ENCODE measurements at regions of chr22 and their contacts with region 1.

Region 1: DNA sequence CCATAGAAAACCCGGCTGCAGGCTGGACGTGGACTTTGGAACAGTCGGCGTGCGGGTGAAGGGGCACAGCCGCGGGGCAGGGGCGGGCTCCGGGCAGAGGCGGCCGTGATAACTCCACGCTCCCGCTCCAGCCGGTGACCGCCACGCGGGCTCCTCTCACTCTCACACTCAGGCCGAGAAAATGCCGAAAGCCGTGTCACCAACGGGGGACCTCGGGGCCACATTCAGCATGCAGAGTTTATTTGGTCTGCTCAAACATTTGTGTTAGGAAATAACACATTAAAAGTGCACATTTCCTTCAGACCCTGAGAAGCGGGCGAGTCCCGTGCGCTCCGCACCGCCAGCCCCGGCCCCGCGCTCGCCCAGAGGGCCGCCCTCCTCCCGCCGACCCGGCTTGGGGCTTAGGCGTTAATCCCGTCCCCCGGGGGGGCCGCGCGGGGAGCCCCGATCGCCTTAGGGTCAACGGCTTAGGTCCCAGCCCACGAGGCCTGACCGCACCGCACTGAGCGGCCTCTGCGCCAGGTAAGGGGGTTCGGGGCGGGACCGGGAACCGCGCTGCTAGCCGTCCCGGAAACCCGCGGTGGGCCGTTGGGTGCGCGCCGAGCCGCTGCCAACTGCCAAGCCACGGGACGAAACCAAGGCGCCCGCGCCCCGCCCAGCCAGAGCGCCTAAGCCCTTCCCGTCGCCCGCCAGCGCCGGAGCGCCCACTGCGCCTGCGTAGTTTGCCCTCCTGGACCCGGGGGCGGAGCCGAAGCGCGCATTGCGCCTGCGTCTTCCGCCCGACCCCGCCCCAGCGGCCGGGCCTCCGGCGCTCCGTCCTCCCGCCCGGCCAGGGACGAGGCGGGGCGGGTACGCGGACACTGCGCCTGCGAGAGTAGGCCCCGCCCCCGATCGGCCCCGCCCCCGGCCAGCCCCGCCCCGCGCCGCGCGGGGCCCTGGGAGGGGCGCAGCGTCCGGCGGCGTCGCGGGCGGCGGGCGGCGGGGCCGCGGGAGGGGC is at the start of gene ZBED4:
- DNase-seq: peak; percentile 91 to 96
- ATAC-seq: peak; percentile 88 to 90
- H3K4me3 ChIP-seq: peak within 1 kb of the TSS; percentile 66 to 82 (median 73)
- H3K27ac ChIP-seq: peak within 1 kb of the TSS; percentile 83 to 92 (median 86)
- H3K4me1 ChIP-seq: peaks cover 25 to 35% of the 10 kb centered on the region in 2 donors
- H3K27me3 ChIP-seq: peaks cover 26 to 27% (median 26%) of the 10 kb centered on the region in 3 donors
- CTCF ChIP-seq: no peak
- POLR2A ChIP-seq: peak; percentile 74 to 82
- total RNA-seq, gene ZBED4: 6.7 to 8.4 (median 7.5) TPM

Region 2: GRCh38 chr22:49779853-49780697 is 73.1 kb before region 1 on chr22:
- in situ Hi-C with region 1: no loop called
- intact Hi-C with region 1: loop called (anchors 2 kb)
- DNase-seq: peak; percentile 47 to 77
- ATAC-seq: peak; percentile 81 to 83
- H3K4me3 ChIP-seq: no peak overlapping the region
- H3K27ac ChIP-seq: peak overlapping the region; percentile 22 to 74 (median 69)
- H3K4me1 ChIP-seq: peaks cover 23 to 29% of the 10 kb centered on the region in 2 donors
- H3K27me3 ChIP-seq: no peaks in the 10 kb centered on the region
- CTCF ChIP-seq: no peak
- POLR2A ChIP-seq: no peak

Region 3: GRCh38 chr22:49789289-49790141 is 63.7 kb before region 1 on chr22:
- in situ Hi-C with region 1: no loop called
- intact Hi-C with region 1: loop called (anchors 2 kb)
- DNase-seq: peak in 1 of 2 donors; percentile 50
- ATAC-seq: no peak
- H3K4me3 ChIP-seq: peak overlapping the region in 3 of 4 donors; percentile 3 to 24 (median 21)
- H3K27ac ChIP-seq: peak overlapping the region; percentile 69 to 83 (median 79)
- H3K4me1 ChIP-seq: peaks cover 76 to 83% of the 10 kb centered on the region in 2 donors
- H3K27me3 ChIP-seq: no peaks in the 10 kb centered on the region
- CTCF ChIP-seq: no peak
- POLR2A ChIP-seq: no peak

Region 4: DNA sequence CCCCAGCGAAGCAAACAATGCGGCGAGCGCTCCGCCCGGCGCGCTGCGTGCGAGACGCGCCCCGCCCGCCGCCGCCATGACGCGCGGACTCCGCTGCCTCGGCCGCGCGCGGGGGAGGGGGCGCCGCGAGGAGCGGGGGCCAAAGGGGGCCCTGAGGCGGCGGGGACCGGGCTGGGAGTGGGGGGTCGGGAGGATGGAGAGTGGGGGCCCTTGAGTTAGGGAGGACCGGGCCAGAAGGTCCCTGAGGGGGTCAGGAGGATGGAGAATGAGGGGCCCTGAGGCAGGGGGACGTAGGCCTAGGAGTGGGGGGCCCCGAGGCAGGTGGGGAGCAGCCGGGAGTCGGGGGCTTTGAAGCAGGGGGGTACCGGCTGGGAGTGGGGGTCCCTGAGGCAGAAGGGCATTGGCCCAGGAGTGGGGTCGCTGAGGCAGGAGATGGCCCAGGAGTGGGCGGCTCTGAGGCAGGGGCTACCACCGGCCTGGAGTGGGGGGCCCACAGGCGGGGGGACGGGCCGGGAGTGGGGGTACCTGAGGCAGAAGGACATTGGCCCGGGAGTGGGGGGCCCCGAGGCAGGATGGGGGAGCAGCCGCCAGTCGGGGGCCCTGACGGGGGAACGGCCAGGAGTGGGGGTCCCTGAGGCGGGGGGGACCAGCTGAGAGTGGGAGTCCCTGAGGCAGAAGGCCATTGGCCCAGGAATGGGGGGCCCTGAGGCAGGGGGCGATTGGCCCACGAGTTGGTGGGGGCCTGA is 25.2 kb before region 1 on chr22 and contains the start of gene BRD1:
- in situ Hi-C with region 1: no loop called
- intact Hi-C with region 1: loop called (anchors 1 kb)
- DNase-seq: peak in 1 of 2 donors; percentile 42
- ATAC-seq: peak; percentile 68 to 69
- H3K4me3 ChIP-seq: peak within 1 kb of the TSS; percentile 62 to 70 (median 65)
- H3K27ac ChIP-seq: peak within 1 kb of the TSS; percentile 75 to 90 (median 82)
- H3K4me1 ChIP-seq: peaks cover 19 to 27% of the 10 kb centered on the region in 2 donors
- H3K27me3 ChIP-seq: no peaks in the 10 kb centered on the region
- CTCF ChIP-seq: no peak
- POLR2A ChIP-seq: peak; percentile 20 to 21
- total RNA-seq, gene BRD1: 15.6 to 25.2 (median 18.1) TPM

Region 5: DNA sequence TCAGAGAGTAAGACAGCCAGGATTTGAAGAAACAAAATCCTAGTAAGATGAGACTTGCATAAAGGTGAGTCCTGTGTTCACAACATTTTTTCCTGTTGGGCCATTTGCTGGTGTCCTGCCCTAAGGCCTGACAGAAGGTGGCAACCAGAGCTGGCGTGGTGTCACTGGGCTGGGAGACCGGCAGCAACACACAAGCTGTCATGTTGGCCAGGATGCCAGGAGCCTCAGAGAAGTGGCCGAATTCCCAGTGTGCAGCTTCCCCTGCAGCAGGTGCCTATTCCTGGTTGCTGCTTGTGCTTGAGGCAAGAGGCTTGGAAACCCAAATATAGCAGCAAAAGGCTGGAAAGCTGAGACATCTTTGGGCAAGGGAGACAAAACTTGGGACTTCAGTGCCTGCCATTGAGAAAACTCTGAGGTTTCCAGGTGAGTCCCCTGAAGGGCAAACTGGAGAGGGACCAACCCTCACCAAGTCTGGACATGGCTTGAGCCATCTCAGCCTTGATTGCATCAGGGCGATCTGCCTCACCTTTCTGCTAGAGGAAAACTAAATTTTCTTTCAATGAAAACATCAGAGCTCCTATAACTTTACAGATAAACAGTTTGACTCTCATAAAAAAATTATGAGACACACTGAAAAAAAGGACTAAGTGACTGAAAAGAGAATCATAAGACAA is 39.2 kb after region 1 on chr22:
- in situ Hi-C with region 1: no loop called
- intact Hi-C with region 1: loop called (anchors 1 kb)
- DNase-seq: peak; percentile 67 to 91
- ATAC-seq: peak; percentile 93 to 98
- H3K4me3 ChIP-seq: no peak overlapping the region
- H3K27ac ChIP-seq: peak overlapping the region; percentile 17 to 68 (median 58)
- H3K4me1 ChIP-seq: peaks cover 12 to 15% of the 10 kb centered on the region in 2 donors
- H3K27me3 ChIP-seq: no peaks in the 10 kb centered on the region
- CTCF ChIP-seq: no peak
- POLR2A ChIP-seq: no peak

Region 6: DNA sequence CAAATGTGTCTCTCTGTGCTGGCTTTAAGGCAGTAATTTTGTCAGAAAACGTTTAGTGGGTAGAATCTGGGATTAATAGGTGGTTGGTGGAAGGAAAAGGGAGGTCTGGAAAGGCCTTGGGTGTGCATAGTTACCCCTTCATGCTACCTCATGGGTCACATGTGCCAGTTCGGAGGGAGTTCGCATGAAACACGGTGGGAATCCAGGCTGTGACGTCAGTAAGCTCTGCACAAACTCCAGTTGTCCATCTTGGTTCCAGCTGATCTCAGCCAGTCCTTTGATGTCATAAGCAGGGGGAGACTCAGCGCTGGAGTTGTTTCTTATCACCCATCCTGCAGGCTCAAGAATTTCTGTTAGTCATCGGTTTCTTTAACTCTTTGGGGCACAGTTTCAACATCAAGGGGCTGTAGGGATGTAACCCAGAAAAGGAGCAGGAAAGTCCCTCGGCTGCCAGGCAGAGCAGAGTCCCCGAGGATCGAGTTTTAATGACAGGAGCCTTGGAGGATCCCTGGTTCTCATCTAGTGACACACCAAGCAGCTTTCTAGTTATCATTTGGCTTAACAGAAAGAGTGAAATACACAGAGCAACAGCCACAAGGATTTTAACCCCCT is 265.5 kb after region 1 on chr22:
- in situ Hi-C with region 1: no loop called
- intact Hi-C with region 1: no loop called
- DNase-seq: no peak
- ATAC-seq: no peak
- H3K4me3 ChIP-seq: no peak overlapping the region
- H3K27ac ChIP-seq: no peak overlapping the region
- H3K4me1 ChIP-seq: no peaks in the 10 kb centered on the region
- H3K27me3 ChIP-seq: peaks cover 14 to 31% (median 15%) of the 10 kb centered on the region in 3 donors
- CTCF ChIP-seq: no peak
- POLR2A ChIP-seq: no peak

Region 7: GRCh38 chr22:50507991-50508884 is 655.0 kb after region 1 on chr22 and contains the start of gene NCAPH2:
- in situ Hi-C with region 1: no loop called
- intact Hi-C with region 1: loop called (anchors 10 kb)
- DNase-seq: peak; percentile 89 to 93
- ATAC-seq: peak; percentile 87 to 89
- H3K4me3 ChIP-seq: peak within 1 kb of the TSS; percentile 87 to 99 (median 96)
- H3K27ac ChIP-seq: peak within 1 kb of the TSS; percentile 85 to 97 (median 94)
- H3K4me1 ChIP-seq: peaks cover 15 to 22% of the 10 kb centered on the region in 2 donors
- H3K27me3 ChIP-seq: no peaks in the 10 kb centered on the region
- CTCF ChIP-seq: no peak
- POLR2A ChIP-seq: peak; percentile 59 to 62
- total RNA-seq, gene NCAPH2: 19.0 to 29.3 (median 23.4) TPM